Sigmoid colon (tissue), 7 donors: ENCODE measurements at regions of chr7 and their contacts with region 1.

Region 1: DNA sequence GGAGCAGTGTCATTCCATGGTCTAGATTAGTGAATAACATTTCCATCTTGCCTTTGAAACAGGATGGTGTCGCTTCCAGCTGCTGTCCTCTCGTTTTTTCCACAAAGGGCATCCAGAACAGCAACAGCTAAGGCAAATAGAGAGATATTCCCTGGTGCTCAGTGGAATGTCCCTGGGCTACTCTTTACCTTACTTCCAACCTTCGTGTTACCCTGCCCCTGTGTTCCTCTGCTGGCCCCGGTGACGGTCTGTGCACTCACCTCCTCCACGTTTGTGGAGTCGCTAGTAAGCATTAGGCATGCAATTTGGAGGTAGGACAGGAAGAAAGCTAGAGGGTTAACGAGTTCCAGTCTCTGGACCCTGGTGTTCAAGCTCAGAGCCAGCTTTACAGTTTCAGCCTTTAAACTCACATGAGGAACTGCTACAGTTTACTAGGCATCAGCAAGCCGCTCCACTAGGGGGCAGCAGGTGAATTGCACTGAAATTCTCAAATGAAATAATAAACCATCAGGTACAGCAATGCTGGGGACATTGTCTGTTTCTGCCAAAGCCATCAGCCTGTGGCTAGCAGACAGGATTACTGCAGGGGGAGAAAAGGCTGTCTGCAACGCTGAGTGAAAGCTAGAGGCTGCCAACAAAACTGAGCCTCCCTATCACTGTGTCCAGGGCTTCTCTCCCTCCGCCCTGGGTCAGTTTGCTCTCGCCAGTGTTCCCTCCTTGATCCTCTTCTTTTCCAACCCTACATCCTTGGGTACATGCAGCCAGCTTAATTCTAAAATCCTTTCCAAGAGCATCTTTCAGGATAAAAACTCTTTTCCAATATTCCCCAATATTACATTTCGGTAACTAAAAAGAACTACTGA is 9.0 kb downstream of the MRPL32 start:
- DNase-seq: peak; percentile 84
- H3K4me3 ChIP-seq: no peak overlapping the region
- H3K27ac ChIP-seq: no peak overlapping the region
- H3K4me1 ChIP-seq: peaks cover 0 to 3% (median 0%) of the 10 kb centered on the region in 4 donors
- H3K27me3 ChIP-seq: no peaks in the 10 kb centered on the region
- CTCF ChIP-seq: peak; percentile 61 to 91 (median 73)
- EP300 ChIP-seq: no peak
- POLR2A ChIP-seq: no peak

Region 2: DNA sequence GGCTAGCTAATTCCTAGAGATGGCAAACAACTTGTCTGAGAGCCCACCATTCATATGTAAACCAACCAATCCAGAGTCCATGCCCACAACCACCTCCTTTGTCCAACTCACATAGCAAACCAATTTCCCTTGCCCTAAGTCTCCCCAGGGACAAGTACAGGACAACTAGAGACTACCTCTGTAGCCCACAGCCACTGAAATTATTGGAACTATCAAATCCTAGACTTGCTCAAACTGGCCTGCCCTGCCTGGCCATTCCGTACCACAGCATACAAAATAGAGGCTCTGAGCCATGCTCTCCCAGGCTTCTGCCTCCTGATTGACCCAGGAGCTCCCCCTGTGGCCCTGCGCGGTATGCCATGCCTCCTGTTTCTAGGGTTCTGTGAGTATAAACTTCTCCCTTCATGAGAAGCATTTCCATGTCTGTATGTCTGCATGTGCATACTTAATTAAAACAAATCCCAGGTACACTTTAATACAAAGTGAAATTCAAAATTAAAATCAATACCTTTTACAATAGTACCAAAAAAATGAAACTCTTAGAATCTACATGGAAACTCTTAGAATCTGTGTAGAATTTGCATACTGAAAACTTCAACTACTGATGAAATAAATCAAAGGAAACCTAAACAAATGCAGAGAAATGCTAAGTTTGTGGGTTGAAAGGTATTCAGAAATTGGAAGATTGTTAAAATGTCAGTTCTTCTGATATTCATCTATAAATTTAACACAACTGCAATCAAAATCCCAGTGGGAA is 167.2 kb after region 1 on chr7:
- intact Hi-C with region 1: loop called (anchors 5 kb)
- DNase-seq: no peak
- H3K4me3 ChIP-seq: no peak overlapping the region
- H3K27ac ChIP-seq: no peak overlapping the region
- H3K4me1 ChIP-seq: peaks cover 0 to 17% (median 15%) of the 10 kb centered on the region in 4 donors
- H3K27me3 ChIP-seq: peaks cover 11 to 45% (median 20%) of the 10 kb centered on the region in 3 donors
- CTCF ChIP-seq: peak in 3 of 4 experiments; percentile 32 to 70 (median 50)
- EP300 ChIP-seq: no peak
- POLR2A ChIP-seq: no peak

Region 3: GRCh38 chr7:43248961-43249822 is 308.0 kb after region 1 on chr7:
- intact Hi-C with region 1: loop called (anchors 2 kb)
- DNase-seq: peak; percentile 73
- H3K4me3 ChIP-seq: peak overlapping the region; percentile 11 to 29 (median 18)
- H3K27ac ChIP-seq: peak overlapping the region in 3 of 4 donors; percentile 10 to 55 (median 32)
- H3K4me1 ChIP-seq: peaks cover 0 to 16% (median 11%) of the 10 kb centered on the region in 4 donors
- H3K27me3 ChIP-seq: no peaks in the 10 kb centered on the region
- CTCF ChIP-seq: no peak
- EP300 ChIP-seq: no peak
- POLR2A ChIP-seq: no peak

Region 4: GRCh38 chr7:43260980-43261878 is 320.0 kb after region 1 on chr7:
- intact Hi-C with region 1: loop called (anchors 2 kb)
- DNase-seq: peak; percentile 81
- H3K4me3 ChIP-seq: no peak overlapping the region
- H3K27ac ChIP-seq: no peak overlapping the region
- H3K4me1 ChIP-seq: peaks cover 0 to 7% (median 0%) of the 10 kb centered on the region in 4 donors
- H3K27me3 ChIP-seq: no peaks in the 10 kb centered on the region
- CTCF ChIP-seq: peak; percentile 50 to 91 (median 83)
- EP300 ChIP-seq: no peak
- POLR2A ChIP-seq: no peak